Panc1 (cell line): ENCODE measurements at regions of chr1 and their contacts with region 1.

Region 1: DNA sequence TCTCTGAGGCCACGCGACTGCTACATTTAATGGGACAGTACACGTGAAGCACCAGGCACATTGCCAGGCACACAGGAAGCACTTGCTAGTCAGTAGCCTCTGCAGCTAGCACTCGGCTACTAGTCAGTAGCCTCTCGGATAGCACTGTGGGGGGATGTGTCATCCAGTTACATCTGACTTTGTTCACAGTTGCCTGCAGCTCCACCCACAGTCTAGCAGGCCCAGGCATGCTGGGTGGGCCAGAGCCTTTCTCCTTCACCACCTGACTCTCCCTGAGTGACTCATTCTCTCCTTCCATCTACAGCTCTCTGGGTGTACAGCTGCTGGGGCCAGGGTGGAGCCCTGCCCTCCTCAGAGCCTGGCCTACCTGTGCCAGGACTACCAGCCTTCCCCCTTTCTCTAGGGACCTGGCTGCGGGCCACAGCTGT is 51.5 kb downstream of the PTPRF start:
- DNase-seq: peak; percentile 69
- ATAC-seq: peak; percentile 59; the same call in 1 of the 2 replicates
- H3K4me3 ChIP-seq: no peak overlapping the region
- H3K27ac ChIP-seq: no peak overlapping the region
- H3K4me1 ChIP-seq: no peaks in the 10 kb centered on the region
- H3K27me3 ChIP-seq: no peaks in the 10 kb centered on the region
- CTCF ChIP-seq: no peak

Region 2: DNA sequence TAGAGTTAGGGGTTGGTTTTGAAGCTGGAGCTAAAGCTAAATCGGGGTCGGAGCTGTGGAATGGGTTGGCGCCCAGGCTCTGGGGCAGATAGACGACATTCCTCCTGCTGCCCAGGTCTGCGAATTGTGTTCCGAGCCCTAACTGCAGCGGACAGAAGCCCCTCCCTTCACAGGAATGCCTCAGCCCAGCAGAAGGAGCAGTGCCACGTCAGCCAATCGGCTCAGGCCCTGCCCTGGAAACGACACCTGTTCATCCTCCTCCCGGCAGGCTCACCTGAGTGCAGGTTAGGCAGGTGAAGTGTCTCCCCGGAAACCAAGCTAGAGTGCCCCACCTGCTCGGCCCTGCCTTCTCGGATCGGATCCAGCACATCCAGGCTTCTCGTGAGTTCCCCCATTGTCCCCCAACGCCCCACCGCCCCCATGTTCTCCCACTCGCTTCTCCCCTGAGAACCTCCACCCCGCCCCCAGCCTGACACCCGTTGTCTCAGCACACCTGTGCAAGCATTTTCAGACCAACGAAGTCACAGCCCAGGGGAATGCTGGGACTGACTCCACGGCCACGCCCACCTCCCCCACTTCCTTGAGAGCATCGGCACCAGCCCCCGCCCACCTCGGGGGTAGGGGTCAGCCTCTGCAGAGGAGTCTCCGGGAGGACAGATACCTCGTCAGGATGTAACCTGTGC is 311.6 kb before region 1 on chr1:
- CTCF ChIA-PET with region 1: no interaction called
- POLR2A ChIA-PET with region 1: no interaction called
- in situ Hi-C with region 1: no loop called
- intact Hi-C with region 1: no loop called
- DNase-seq: no peak
- ATAC-seq: no peak
- H3K4me3 ChIP-seq: no peak overlapping the region
- H3K27ac ChIP-seq: no peak overlapping the region
- H3K4me1 ChIP-seq: no peaks in the 10 kb centered on the region
- H3K27me3 ChIP-seq: no peaks in the 10 kb centered on the region
- CTCF ChIP-seq: no peak

Region 3: DNA sequence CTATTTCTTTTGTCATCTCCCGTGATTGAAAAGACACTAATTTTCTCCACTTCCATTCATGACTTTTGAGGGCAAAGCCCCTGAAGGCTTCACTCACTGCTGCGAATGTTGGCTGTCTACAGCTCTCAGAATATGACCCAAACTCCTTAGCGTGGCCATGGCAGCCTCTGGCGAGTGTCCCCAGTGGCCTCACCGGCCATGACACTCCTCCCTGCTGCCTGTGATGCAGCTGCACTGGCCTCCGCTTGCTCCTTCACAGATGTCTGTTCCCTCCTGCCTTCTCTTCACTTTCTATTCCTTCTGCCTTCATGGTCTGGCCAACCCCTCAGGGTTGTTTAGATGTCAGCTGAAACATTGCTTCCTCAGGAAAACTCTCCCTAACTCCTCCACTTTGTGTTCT is 82.3 kb before region 1 on chr1:
- CTCF ChIA-PET with region 1: no interaction called
- POLR2A ChIA-PET with region 1: no interaction called
- in situ Hi-C with region 1: no loop called
- intact Hi-C with region 1: no loop called
- DNase-seq: no peak
- ATAC-seq: peak; percentile 68
- H3K4me3 ChIP-seq: no peak overlapping the region
- H3K27ac ChIP-seq: no peak overlapping the region
- H3K4me1 ChIP-seq: no peaks in the 10 kb centered on the region
- H3K27me3 ChIP-seq: no peaks in the 10 kb centered on the region
- CTCF ChIP-seq: no peak

Region 4: DNA sequence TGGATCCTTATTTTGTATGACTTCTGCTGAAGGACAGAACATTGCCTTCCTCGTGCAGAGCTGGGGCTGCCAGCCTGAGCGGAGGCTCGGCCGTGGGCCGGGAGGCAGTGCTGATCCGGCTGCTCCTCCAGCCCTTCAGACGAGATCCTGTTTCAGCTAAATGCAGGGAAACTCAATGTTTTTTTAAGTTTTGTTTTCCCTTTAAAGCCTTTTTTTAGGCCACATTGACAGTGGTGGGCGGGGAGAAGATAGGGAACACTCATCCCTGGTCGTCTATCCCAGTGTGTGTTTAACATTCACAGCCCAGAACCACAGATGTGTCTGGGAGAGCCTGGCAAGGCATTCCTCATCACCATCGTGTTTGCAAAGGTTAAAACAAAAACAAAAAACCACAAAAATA is 40.3 kb after region 1 on chr1:
- CTCF ChIA-PET with region 1: no interaction called
- POLR2A ChIA-PET with region 1: interaction called, 10 read pairs
- in situ Hi-C with region 1: no loop called
- intact Hi-C with region 1: no loop called
- DNase-seq: no peak
- ATAC-seq: no peak
- H3K4me3 ChIP-seq: no peak overlapping the region
- H3K27ac ChIP-seq: no peak overlapping the region
- H3K4me1 ChIP-seq: no peaks in the 10 kb centered on the region
- H3K27me3 ChIP-seq: no peaks in the 10 kb centered on the region
- CTCF ChIP-seq: no peak

Region 5: GRCh38 chr1:44294588-44295007 is 712.4 kb after region 1 on chr1:
- CTCF ChIA-PET with region 1: no interaction called
- POLR2A ChIA-PET with region 1: no interaction called
- in situ Hi-C with region 1: no loop called
- intact Hi-C with region 1: no loop called
- DNase-seq: no peak
- ATAC-seq: peak; percentile 52; the same call in 1 of the 2 replicates
- H3K4me3 ChIP-seq: no peak overlapping the region
- H3K27ac ChIP-seq: no peak overlapping the region
- H3K4me1 ChIP-seq: no peaks in the 10 kb centered on the region
- H3K27me3 ChIP-seq: no peaks in the 10 kb centered on the region
- CTCF ChIP-seq: no peak; the same call in 1 of the 2 replicates